ENCODE measurements at regions of chr9 and their contacts with region 1.

Region 1: DNA sequence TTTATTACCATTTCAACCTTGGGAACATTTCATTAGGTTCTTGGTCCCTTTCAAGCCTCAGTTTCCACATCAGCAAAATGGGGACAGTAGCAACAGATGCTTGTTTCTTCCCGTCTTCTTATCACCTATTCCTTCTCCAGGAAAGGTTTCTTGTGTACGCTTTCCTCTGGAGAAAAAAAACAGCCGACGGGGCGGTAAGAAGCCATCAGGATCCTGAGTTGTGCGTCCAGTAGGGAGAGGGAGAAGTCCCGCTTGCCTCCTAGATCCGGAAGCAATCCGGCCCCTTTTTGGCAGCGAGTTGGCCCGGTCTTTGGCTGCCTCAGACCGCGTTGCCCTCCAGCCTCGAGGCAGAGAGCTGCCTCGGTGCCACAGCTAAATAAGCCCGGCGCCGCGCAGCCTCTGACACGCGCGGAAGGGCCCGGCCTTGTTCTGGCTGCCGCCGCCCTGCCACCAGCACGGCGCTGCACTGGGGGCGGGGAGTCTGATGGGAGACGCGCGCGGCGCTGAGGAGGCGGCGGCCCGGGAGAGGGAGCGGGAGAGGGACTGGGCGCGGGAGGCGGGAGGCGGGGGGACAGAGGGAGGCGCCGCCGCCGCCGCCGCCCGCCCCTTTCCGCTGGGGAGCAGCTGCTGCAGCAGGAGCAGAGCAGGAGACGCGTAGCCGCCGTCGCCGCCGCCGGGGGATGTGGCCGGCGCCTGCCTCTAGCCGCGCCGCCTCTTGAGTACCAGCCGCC is at the start of gene SLC44A1:
- DNase-seq: peak; percentile 95
- ATAC-seq: peak; percentile 97
- H3K4me3 Mint-ChIP-seq: peak within 1 kb of the TSS; percentile 83
- H3K27ac Mint-ChIP-seq: peak within 1 kb of the TSS; percentile 75
- H3K4me1 Mint-ChIP-seq: peaks cover 25% of the 10 kb centered on the region
- H3K27me3 Mint-ChIP-seq: peaks cover 61% of the 10 kb centered on the region
- total RNA-seq, gene SLC44A1: 14.1 to 14.3 TPM

Region 2: GRCh38 chr9:105191508-105192121 is 52.6 kb before region 1 on chr9:
- CTCF ChIA-PET with region 1: no interaction called
- POLR2A ChIA-PET with region 1: no interaction called
- DNase-seq: no peak
- ATAC-seq: no peak
- H3K4me3 Mint-ChIP-seq: no peak overlapping the region
- H3K27ac Mint-ChIP-seq: no peak overlapping the region
- H3K4me1 Mint-ChIP-seq: no peaks in the 10 kb centered on the region
- H3K27me3 Mint-ChIP-seq: peaks cover 6% of the 10 kb centered on the region

Region 3: DNA sequence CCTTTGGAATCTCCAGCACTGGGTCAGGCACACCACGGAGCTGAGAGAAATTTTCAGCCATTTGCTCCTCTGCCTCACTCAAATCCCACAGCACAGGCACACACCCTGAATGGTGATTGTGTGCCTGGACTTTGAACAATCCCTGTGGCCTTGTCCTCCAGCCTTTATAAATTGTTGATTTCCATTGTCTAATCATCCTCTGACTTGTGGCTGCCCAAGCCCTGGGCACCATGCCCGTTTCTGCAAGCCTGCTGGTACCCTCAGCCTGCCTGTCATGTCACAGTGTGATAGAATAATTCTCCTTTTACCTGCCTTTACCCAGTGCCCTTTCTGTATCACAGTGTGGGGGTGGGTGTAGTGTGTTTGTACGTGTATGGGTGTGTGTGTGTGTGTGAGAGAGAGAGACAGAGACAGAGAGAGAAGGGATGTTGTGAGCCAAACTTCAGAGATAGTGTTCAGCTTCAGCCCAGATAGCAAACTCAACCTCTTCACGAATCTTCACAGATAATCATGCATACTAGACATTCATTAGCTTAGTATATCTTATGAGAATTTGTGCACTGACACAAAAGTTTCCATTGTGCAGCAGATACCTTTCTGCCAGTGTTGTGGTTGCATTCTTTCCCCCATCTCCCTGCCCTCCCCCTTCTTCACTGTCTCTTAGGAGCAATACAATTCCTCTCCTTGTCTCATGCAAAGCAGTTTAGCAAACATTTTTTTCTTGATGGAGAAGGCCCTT is 27.6 kb before region 1 on chr9:
- CTCF ChIA-PET with region 1: no interaction called
- POLR2A ChIA-PET with region 1: no interaction called
- DNase-seq: no peak
- ATAC-seq: no peak
- H3K4me3 Mint-ChIP-seq: no peak overlapping the region
- H3K27ac Mint-ChIP-seq: no peak overlapping the region
- H3K4me1 Mint-ChIP-seq: no peaks in the 10 kb centered on the region
- H3K27me3 Mint-ChIP-seq: peaks cover 4% of the 10 kb centered on the region

Region 4: DNA sequence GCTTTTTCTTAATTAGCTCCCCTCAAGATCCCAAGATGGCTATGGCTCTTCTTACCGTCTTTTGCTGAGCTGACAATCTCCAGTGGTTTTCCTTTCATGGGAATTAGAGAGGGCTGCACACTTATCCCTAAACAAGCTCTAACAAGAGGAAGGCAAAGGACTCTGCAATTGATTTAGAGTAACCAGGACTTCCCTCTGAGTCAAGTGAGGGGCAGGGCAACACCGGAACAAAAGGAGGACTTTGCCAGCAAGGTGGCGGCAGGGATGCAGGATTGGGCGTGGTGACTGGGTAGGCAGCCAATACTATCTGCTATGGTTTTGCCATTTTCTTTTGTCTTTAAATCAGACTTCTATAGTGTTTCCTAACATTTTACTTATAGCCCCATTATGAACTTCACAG is 10.1 kb after region 1 on chr9:
- CTCF ChIA-PET with region 1: interaction called, 12 read pairs
- POLR2A ChIA-PET with region 1: interaction called, 5 read pairs
- DNase-seq: no peak
- ATAC-seq: no peak
- H3K4me3 Mint-ChIP-seq: no peak overlapping the region
- H3K27ac Mint-ChIP-seq: no peak overlapping the region
- H3K4me1 Mint-ChIP-seq: peaks cover 7% of the 10 kb centered on the region
- H3K27me3 Mint-ChIP-seq: peaks cover 2% of the 10 kb centered on the region

Region 5: DNA sequence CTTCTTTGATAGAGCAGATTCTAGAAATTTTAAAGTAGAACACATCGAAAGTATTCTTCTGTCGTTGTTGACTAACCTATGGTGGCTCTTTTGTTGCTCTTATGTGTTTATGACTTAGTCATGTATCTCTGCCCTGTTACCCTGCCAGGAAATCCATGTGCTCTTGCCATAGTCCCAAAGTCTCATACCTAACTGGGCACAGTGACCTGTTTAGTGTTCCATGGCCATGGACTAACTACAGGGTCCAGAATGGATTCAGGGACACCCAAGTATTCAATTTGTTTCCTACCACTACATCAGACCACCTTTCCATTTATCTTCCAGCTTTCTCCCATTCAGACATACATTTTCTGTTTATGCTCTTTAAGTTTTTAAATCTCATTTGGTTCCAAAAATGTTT is 18.3 kb after region 1 on chr9:
- CTCF ChIA-PET with region 1: interaction called, 10 read pairs
- POLR2A ChIA-PET with region 1: interaction called, 5 read pairs
- DNase-seq: no peak
- ATAC-seq: no peak
- H3K4me3 Mint-ChIP-seq: no peak overlapping the region
- H3K27ac Mint-ChIP-seq: peak overlapping the region; percentile 19
- H3K4me1 Mint-ChIP-seq: peaks cover 28% of the 10 kb centered on the region
- H3K27me3 Mint-ChIP-seq: no peaks in the 10 kb centered on the region